ENCODE measurements at regions of chr6 and their contacts with region 1.

Region 1: DNA sequence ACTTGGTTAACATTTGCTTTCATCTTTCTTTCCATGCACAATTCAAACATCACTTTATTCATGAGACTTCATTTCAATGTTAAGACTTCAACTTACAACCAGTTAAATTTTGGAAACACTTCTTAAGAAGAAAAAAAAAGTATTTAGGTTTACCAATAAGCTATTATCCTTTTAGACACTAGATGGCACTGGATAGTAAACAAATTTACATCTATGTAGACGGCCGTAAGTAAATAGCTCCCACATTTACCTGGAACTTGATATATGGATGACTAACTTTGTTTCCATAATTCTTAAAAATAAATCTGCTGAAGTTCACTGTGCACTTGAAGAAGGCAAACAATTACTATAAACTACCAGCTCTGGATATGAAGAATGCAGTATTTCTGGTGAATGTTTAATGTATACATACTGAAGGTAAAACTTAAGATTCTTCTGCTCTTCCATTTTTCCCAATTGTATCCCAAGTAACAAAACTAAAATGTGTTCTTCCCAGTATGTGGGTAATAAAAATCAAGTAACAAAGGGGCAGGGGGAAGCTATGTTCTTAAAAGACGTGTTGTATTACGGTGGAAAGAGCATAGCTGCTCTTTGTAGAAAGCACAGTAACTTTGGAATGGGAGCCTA is 130.6 kb upstream of the C6orf118 start:
- DNase-seq: no peak
- ATAC-seq: no peak
- H3K4me3 ChIP-seq: no peak overlapping the region
- H3K4me3 Mint-ChIP-seq: no peak overlapping the region
- H3K27ac ChIP-seq: no peak overlapping the region
- H3K27ac Mint-ChIP-seq: no peak overlapping the region
- H3K4me1 ChIP-seq: no peaks in the 10 kb centered on the region
- H3K4me1 Mint-ChIP-seq: no peaks in the 10 kb centered on the region
- H3K27me3 ChIP-seq: no peaks in the 10 kb centered on the region
- H3K27me3 Mint-ChIP-seq: no peaks in the 10 kb centered on the region

Region 2: DNA sequence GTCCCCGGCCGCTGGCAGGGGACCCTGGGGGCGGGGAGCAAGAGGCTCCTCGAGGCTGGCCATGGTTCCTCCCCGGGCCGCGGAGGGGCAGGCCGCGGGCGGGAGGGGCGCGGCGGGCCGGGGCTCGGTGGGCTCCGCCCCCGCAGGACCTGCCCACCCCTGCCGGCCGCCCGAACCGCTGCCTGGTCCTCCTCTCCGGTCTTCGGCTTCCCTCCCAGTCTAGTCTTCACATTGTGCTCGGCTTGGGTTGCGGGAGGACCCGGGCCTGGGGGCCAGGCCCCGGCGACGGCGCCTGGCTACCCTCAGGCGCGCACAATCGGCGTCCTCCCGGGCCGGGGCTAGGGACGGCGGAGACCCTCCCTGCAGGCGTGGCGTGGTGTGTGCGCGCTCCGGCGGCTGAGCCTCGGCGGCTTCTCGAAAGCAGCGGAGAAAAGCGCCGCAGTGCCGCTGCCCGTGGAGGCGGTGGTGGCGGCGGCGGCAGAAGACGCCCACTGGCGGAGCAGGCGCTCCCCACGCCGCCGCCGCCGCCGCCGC is 222.8 kb after region 1 on chr6 and contains the start of gene PDE10A:
- CTCF ChIA-PET with region 1: no interaction called
- POLR2A ChIA-PET with region 1: no interaction called
- intact Hi-C with region 1: loop called in 1 of 2 experiments (anchors 5 kb)
- DNase-seq: no peak
- ATAC-seq: no peak
- H3K4me3 ChIP-seq: no peak within 1 kb of the TSS
- H3K4me3 Mint-ChIP-seq: peak within 1 kb of the TSS in 4 of 10 donors; percentile 29 to 59 (median 42)
- H3K27ac ChIP-seq: no peak within 1 kb of the TSS
- H3K27ac Mint-ChIP-seq: peak within 1 kb of the TSS in 1 of 9 donors; percentile 60
- H3K4me1 ChIP-seq: no peaks in the 10 kb centered on the region
- H3K4me1 Mint-ChIP-seq: peaks cover 0 to 10% (median 3%) of the 10 kb centered on the region in 7 donors
- H3K27me3 ChIP-seq: no peaks in the 10 kb centered on the region
- H3K27me3 Mint-ChIP-seq: peaks cover 51 to 69% (median 54%) of the 10 kb centered on the region in 5 donors
- total RNA-seq, gene PDE10A: not detected

Region 3: GRCh38 chr6:165850434-165851019 is 410.5 kb after region 1 on chr6:
- CTCF ChIA-PET with region 1: no interaction called
- POLR2A ChIA-PET with region 1: no interaction called
- intact Hi-C with region 1: loop called in 1 of 2 experiments (anchors 1 kb)
- DNase-seq: peak in 7 of 9 donors; percentile 11 to 60 (median 33)
- ATAC-seq: peak; percentile 73
- H3K4me3 ChIP-seq: no peak overlapping the region
- H3K4me3 Mint-ChIP-seq: peak overlapping the region in 3 of 10 donors; percentile 31 to 52 (median 39)
- H3K27ac ChIP-seq: no peak overlapping the region
- H3K27ac Mint-ChIP-seq: no peak overlapping the region
- H3K4me1 ChIP-seq: no peaks in the 10 kb centered on the region
- H3K4me1 Mint-ChIP-seq: peaks cover 3 to 13% (median 7%) of the 10 kb centered on the region in 7 donors
- H3K27me3 ChIP-seq: peaks cover 0 to 1% of the 10 kb centered on the region in 2 donors
- H3K27me3 Mint-ChIP-seq: peaks cover 60 to 73% (median 66%) of the 10 kb centered on the region in 5 donors